Activated naive CD4-positive, alpha-beta T cell treated with anti-CD3 and anti-CD28 coated beads, Interleukin-2, amount 10 ng/mL, durations not matched to agents 7 days and 5 days (primary cell): ENCODE measurements at regions of chr18 and their contacts with region 1.

Region 1: DNA sequence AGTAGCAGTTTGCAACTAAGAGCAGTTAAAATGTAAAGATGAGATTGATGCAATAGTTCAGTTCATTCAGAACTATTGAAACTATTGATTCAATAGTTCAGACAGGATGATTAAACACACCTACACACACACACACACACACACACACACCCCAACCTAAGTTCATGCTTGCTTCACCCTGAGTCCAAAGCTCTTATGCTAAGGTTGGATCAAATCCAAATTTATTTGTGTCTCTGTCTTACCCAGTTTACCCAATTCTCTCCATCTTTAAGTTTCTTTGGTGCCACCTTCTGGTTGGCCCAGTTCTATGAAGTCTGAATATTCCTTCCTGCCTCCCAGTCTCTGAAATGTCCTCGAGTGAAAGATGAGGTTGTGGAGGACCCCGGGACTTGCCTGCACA is 5.1 kb downstream of the SERPINB8 start:
- DNase-seq: peak; percentile 43
- H3K4me3 Mint-ChIP-seq: no peak overlapping the region
- H3K27ac Mint-ChIP-seq: peak overlapping the region; percentile 7
- H3K4me1 Mint-ChIP-seq: peaks cover 19% of the 10 kb centered on the region
- H3K27me3 Mint-ChIP-seq: no peaks in the 10 kb centered on the region

Region 2: DNA sequence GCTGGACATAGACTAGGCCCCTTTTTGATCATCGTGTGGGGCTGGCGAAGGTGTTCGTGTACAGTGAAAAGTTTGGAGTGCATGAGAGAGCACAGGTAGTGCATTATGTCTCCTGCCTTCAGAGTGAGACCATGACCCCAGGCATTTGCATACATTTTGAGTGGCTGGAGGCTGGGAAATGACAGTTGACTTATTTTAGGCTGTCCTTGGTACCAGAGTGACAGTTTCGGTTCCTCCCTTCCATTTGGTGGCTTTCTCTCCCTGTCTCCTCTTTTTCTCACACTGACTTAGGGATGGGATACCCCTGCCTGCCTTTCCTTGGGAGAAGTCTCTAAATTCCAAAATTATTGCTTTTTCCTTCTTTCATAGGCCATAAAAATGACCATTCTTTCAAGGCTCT is 412.7 kb before region 1 on chr18:
- CTCF ChIA-PET with region 1: no interaction called
- DNase-seq: no peak
- H3K4me3 Mint-ChIP-seq: no peak overlapping the region
- H3K27ac Mint-ChIP-seq: no peak overlapping the region
- H3K4me1 Mint-ChIP-seq: no peaks in the 10 kb centered on the region
- H3K27me3 Mint-ChIP-seq: peaks cover 21% of the 10 kb centered on the region

Region 3: GRCh38 chr18:63936156-63936931 is 38.6 kb before region 1 on chr18:
- CTCF ChIA-PET with region 1: interaction called, 18 read pairs
- DNase-seq: peak; percentile 75
- H3K4me3 Mint-ChIP-seq: peak overlapping the region; percentile 58
- H3K27ac Mint-ChIP-seq: no peak overlapping the region
- H3K4me1 Mint-ChIP-seq: peaks cover 3% of the 10 kb centered on the region
- H3K27me3 Mint-ChIP-seq: peaks cover 8% of the 10 kb centered on the region

Region 4: GRCh38 chr18:63963615-63964256 is 11.3 kb before region 1 on chr18:
- CTCF ChIA-PET with region 1: interaction called, 56 read pairs
- DNase-seq: peak; percentile 66
- H3K4me3 Mint-ChIP-seq: no peak overlapping the region
- H3K27ac Mint-ChIP-seq: no peak overlapping the region
- H3K4me1 Mint-ChIP-seq: no peaks in the 10 kb centered on the region
- H3K27me3 Mint-ChIP-seq: peaks cover 12% of the 10 kb centered on the region